Mammary epithelial cell (primary cell): ENCODE measurements at regions of chr3 and their contacts with region 1.

Region 1: GRCh38 chr3:130759699-130760338 is 13.2 kb upstream of the PIK3R4 start:
- DNase-seq: peak; percentile 62
- H3K4me3 ChIP-seq: peak overlapping the region in 1 of 3 experiments; percentile 23
- H3K27ac ChIP-seq: peak overlapping the region; percentile 9
- H3K4me1 ChIP-seq: peaks cover 16% of the 10 kb centered on the region
- H3K27me3 ChIP-seq: no peaks in the 10 kb centered on the region
- CTCF ChIP-seq: peak; percentile 75 to 83

Region 2: DNA sequence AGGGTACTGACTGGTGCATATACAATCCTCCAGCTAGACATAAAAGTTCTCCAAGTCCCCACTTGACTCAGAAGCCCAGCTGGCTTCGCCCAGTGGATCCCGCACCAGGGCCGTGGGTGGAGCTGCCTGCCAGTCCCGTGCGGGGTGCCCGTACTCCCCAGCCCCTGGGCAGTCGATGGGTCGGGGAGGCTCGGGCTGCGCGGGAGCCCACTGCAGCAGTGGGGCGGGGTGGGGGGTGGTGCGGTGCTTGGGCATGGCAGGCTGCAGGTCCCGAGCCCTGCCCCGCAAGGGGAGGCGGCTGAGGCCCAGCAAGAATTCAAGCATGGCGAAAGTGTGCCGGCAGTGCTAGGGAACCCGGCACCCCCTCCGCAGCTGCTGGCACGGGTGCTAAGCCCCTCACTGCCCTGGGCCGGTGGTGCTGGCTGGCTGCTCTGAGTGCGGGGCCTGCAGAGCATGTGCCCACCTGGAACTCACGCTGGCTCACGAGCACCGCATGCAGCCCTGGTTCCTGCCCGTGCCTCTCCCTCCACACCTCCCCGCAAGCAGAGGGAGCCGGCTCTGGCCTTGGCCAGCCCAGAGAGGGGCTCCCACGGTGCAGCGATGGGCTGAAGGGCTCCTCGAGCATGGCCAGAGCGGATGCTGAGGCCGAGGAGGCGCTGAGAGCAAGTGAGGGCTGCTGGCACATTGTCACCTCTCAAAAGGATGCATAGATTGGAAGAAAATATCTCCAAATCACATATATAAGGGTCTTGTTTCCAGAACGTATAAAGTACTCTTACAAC is 55.1 kb after region 1 on chr3:
- CTCF ChIA-PET with region 1: no interaction called
- dilution Hi-C with region 1: no loop called
- in situ Hi-C with region 1: no loop called
- intact Hi-C with region 1: loop called (anchors 5 kb)
- DNase-seq: no peak
- H3K4me3 ChIP-seq: no peak overlapping the region
- H3K27ac ChIP-seq: no peak overlapping the region
- H3K4me1 ChIP-seq: no peaks in the 10 kb centered on the region
- H3K27me3 ChIP-seq: no peaks in the 10 kb centered on the region
- CTCF ChIP-seq: no peak

Region 3: GRCh38 chr3:130975251-130975650 is 215.4 kb after region 1 on chr3:
- CTCF ChIA-PET with region 1: no interaction called
- dilution Hi-C with region 1: no loop called
- in situ Hi-C with region 1: no loop called
- intact Hi-C with region 1: loop called (anchors 1 kb)
- DNase-seq: peak; percentile 87
- H3K4me3 ChIP-seq: no peak overlapping the region
- H3K27ac ChIP-seq: peak overlapping the region; percentile 56
- H3K4me1 ChIP-seq: peaks cover 23% of the 10 kb centered on the region
- H3K27me3 ChIP-seq: no peaks in the 10 kb centered on the region
- CTCF ChIP-seq: no peak

Region 4: GRCh38 chr3:131020122-131020693 is 260.4 kb after region 1 on chr3:
- CTCF ChIA-PET with region 1: no interaction called
- dilution Hi-C with region 1: loop called (anchors 25 kb)
- in situ Hi-C with region 1: no loop called
- intact Hi-C with region 1: loop called (anchors 1 kb)
- DNase-seq: no peak
- H3K4me3 ChIP-seq: no peak overlapping the region
- H3K27ac ChIP-seq: no peak overlapping the region
- H3K4me1 ChIP-seq: no peaks in the 10 kb centered on the region
- H3K27me3 ChIP-seq: no peaks in the 10 kb centered on the region
- CTCF ChIP-seq: no peak

Region 5: DNA sequence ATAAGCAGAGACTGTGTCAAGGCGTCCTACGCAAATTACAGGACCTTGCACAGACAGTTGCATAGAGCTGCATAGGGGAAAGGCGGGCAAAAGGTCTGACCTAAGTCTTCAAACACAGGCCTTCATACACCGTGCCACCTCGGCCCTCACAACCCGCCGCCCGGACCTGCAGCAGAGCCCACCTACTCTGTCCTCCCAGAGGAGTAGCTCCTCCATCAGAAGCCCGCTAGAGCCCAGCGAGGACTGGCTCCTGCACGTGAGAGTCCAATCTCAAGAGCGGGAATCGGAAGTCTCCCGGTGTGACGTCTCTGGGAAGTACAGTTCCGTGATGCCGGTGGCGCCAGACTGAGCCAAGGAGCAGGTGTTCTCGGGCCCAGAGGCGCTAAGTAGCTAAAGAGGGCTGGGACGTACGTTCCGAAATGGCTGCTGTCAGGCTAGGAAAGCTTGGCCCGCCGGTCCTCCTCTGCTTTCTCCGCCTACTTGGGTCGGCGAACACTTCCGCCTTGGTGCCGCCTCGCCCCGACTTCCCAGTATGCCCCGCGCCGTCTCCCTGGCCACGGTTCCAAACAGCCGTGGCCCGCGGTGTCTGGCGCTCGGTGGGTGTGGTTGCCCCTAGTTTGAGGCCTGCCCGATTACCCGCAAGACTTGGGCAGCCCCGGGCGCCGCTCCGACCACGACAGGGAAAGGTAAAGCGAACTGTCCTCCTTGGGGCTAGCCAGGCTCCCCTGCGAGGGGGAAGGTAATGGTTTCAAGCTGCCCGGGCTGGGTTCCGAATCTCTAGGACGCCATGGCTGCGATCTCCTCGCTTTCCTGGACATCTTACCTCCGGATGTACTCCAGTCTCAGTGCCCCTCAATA is 266.7 kb after region 1 on chr3 and contains the starts of genes ASTE1 and NEK11:
- CTCF ChIA-PET with region 1: no interaction called
- dilution Hi-C with region 1: loop called (anchors 25 kb)
- in situ Hi-C with region 1: no loop called
- intact Hi-C with region 1: loop called (anchors 2 kb)
- DNase-seq: peak; percentile 87
- H3K4me3 ChIP-seq: peak within 1 kb of the TSS; percentile 68 to 81 (median 78)
- H3K27ac ChIP-seq: peak within 1 kb of the TSS; percentile 97
- H3K4me1 ChIP-seq: peaks cover 4% of the 10 kb centered on the region
- H3K27me3 ChIP-seq: no peaks in the 10 kb centered on the region
- CTCF ChIP-seq: peak in 1 of 2 donors; percentile 4
- total RNA-seq, gene ASTE1: 4.4 to 6.3 TPM
- total RNA-seq, gene NEK11: 7.7 to 20.2 TPM